ENCODE measurements at regions of chr3 and their contacts with region 1.

Region 1: GRCh38 chr3:148873270-148873926 is 8.3 kb downstream of the CPA3 start:
- DNase-seq: no peak
- ATAC-seq: no peak
- H3K4me3 ChIP-seq: no peak overlapping the region
- H3K27ac ChIP-seq: no peak overlapping the region
- H3K4me1 ChIP-seq: no peaks in the 10 kb centered on the region
- H3K27me3 ChIP-seq: no peaks in the 10 kb centered on the region
- CTCF ChIP-seq: no peak
- EP300 ChIP-seq: no peak
- POLR2A ChIP-seq: no peak
- RAD21 ChIP-seq: no peak

Region 2: DNA sequence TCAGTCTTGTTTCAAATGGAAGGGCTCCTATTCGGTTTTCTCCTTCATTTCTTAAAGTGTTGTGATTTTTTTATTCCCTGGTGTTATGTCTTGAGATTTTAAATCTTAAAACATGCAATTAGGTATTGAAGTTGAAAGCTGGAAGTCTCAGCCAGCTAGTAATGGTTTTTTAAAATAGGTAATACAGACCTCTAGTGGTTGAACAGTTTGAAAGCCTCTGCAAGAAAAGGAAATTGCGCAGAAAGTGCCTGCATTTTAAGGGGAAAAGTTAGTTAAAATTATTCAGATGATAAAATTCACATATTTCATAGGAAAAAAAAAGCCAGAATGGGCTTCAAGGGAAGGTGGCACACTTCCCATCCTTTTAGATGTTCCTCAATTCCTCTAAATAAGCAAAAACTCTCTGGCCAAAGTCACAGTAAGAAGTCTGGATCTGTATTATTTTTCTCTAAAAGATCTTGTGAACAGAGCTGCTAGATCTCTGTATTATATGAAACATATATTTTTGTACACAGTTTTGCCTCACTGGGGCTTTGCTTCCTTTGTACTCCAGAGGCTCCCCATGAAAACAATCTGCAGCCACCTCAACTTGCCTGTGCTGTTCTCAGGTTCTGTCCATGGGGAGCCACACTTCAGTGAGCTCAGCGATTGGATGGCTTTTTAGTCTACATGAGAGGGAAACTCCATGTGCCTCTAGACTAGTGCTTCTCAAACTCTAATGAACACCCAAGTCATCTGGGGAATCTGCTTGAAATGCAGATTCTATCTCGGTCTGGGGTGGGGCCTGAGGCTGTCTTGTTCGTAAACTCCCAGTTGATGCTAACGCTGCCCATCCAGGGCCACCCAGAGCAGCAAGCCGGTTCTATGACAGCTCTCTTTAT is 154.2 kb before region 1 on chr3:
- CTCF ChIA-PET with region 1: no interaction called
- POLR2A ChIA-PET with region 1: no interaction called
- RAD21 ChIA-PET with region 1: no interaction called
- SMC1A ChIA-PET with region 1: no interaction called
- in situ Hi-C with region 1: no loop called
- intact Hi-C with region 1: loop called (anchors 2 kb)
- DNase-seq: no peak
- ATAC-seq: no peak
- H3K4me3 ChIP-seq: no peak overlapping the region
- H3K27ac ChIP-seq: no peak overlapping the region
- H3K4me1 ChIP-seq: no peaks in the 10 kb centered on the region
- H3K27me3 ChIP-seq: no peaks in the 10 kb centered on the region
- CTCF ChIP-seq: peak in 1 of 3 experiments; percentile 9; a peak in 1 of 6 replicates
- EP300 ChIP-seq: no peak
- POLR2A ChIP-seq: no peak
- RAD21 ChIP-seq: peak; percentile 29; the same call in 1 of the 2 replicates

Measured in GM12878 (cell line).